Activated CD4-positive, alpha-beta memory T cell treated with anti-CD3 and anti-CD28 coated beads, Interleukin-2, amount 10 ng/mL, durations not matched to agents 7 days and 5 days (primary cell): ENCODE measurements at regions of chr9 and their contacts with region 1.

Region 1: DNA sequence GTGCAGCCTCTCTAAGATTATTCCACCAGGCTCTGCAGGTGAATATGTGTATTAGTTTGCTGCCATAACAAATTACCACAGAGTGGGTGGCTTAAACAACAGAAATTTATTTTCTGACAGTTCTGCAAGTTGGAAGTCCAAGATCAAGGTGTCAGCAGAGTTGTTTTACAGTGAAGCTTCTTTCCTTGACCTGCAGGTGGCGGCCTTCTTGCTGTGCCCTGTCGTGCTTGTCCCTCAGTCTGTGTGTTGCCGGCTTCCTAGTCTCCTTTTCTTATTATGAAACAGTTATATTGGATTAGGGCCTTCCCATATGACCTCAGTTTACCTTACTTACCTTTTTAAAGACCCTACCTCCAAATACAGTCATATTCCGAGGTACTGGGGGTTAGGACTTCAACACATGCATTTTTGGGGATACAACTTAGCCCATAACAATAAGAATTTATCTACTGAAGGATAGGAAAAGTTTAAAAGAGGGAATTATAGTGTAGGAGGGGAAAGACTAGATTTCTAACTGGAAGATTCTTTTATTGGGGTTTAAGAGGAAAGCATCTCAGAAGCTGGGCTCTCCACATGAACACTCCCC is 97.4 kb downstream of the OSTF1 start:
- DNase-seq: peak; percentile 62
- H3K4me3 Mint-ChIP-seq: no peak overlapping the region
- H3K27ac Mint-ChIP-seq: no peak overlapping the region
- H3K4me1 Mint-ChIP-seq: peaks cover 34% of the 10 kb centered on the region
- H3K27me3 Mint-ChIP-seq: no peaks in the 10 kb centered on the region

Region 2: DNA sequence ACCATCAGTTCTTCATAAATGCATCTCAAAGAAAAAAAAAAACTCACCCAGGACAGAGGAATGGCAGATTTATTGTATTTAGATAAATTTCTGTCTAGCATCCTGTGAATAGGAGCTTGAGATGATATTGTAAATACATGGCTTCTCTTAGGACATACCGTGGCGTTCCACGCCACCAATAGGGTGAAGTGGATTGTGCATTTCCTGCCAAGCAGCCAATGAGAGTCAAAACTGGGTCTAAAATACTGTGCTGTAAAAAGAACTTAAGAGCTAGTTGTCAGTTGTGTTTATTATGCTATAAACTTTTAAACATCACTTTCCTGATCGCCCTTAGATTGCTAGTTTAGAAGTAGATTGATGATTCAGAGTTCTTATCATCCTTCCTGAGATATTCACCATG is 277.0 kb before region 1 on chr9:
- CTCF ChIA-PET with region 1: no interaction called
- POLR2A ChIA-PET with region 1: no interaction called
- DNase-seq: no peak
- H3K4me3 Mint-ChIP-seq: no peak overlapping the region
- H3K27ac Mint-ChIP-seq: no peak overlapping the region
- H3K4me1 Mint-ChIP-seq: no peaks in the 10 kb centered on the region
- H3K27me3 Mint-ChIP-seq: peaks cover 16% of the 10 kb centered on the region

Region 3: DNA sequence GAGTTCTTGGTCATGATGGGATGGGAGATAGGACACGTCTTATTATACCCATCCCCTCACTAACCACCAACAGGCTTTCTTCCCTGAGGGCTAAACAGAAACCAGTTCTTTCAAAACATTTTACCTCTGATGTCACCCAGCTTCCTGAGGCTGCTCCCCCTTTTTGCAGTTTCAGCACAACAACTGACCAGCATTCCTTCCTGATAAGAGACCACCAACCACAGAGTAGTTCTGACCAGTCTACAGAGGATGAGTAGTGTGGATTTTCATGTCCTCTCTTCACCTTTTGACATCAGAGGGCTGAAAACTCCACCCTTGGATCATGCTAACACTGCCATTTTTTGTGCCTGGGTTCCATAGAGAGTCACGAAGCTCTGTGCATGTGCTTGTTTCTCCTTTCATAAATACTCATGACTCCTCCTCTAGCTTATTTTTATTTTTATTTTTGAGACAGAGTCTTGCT is 14.7 kb before region 1 on chr9:
- CTCF ChIA-PET with region 1: interaction called, 44 read pairs
- POLR2A ChIA-PET with region 1: interaction called, 5 read pairs
- DNase-seq: no peak
- H3K4me3 Mint-ChIP-seq: no peak overlapping the region
- H3K27ac Mint-ChIP-seq: peak overlapping the region; percentile 59
- H3K4me1 Mint-ChIP-seq: peaks cover 66% of the 10 kb centered on the region
- H3K27me3 Mint-ChIP-seq: no peaks in the 10 kb centered on the region

Region 4: DNA sequence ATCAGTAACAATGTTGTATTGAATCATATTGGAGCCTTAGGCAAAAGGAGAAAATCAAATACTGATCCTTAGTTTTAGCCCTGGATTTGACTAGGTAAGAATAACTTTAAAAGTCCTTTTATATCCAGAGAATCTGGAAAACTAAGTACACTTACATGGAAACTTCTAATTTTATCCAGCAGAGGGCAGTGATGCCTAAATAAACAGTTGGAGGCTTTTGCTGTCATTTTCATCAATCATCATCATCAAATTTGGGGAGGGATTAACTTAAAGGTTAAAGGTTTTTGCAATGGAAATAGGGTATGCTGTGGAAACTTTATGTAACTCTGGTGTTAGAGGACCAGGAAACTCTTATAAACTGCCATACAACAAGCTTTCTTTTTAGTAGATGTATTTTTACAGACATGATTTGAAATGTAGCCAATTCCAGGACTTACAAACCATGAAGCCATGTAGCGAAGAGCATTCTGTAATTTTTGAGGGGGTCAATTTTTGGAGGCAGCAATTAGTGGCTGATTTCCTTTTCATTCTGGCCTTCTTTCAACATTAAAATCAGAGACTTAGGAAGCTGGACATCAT is 15.3 kb after region 1 on chr9:
- CTCF ChIA-PET with region 1: interaction called, 20 read pairs
- POLR2A ChIA-PET with region 1: no interaction called
- DNase-seq: no peak
- H3K4me3 Mint-ChIP-seq: no peak overlapping the region
- H3K27ac Mint-ChIP-seq: no peak overlapping the region
- H3K4me1 Mint-ChIP-seq: peaks cover 3% of the 10 kb centered on the region
- H3K27me3 Mint-ChIP-seq: no peaks in the 10 kb centered on the region